Colonic mucosa (tissue), 4 donors: ENCODE measurements at regions of chr11 and their contacts with region 1.

Region 1: DNA sequence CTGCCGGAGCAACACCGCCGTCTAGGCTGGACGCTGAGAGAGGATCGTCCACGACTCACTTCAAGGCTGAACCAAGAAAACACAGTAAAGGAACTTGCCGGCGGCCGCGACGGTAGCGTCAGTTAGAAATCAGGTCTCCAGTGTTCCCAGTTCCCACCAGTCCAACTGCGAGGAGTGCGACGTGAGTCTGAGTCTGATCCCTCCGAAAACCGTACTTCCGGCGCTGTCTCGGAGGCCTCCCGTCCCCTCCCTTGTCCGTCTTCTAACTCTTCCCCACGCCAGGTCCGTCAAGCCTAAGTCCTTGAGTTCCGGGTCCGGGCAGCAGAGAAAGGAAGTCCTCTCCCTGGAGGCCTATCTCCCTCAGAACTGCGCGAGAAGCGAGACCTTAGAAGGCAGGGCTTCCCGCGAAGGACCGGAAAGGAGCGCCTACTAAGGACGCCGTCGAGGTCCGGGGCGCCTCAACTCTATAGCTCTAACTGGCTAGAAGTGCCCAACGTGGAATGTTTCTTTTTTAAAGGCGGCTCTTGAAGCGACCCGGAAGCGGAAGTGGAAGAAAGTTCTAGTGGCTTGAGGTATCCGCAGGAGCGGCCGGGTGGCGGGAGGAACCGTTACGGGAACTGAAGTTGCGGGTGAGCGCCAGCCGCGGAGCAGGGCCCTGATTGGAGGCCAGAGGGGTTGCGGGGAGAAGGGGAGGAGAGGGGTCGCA is at the starts of genes BANF1 and EIF1AD:
- DNase-seq: peak; percentile 95
- H3K4me3 ChIP-seq: peak within 1 kb of the TSS; percentile 71
- H3K27ac ChIP-seq: peak within 1 kb of the TSS; percentile 93
- H3K4me1 ChIP-seq: peaks cover 6% of the 10 kb centered on the region
- H3K27me3 ChIP-seq: no peaks in the 10 kb centered on the region
- CTCF ChIP-seq: no peak
- total RNA-seq, gene BANF1: 128 to 231 TPM
- total RNA-seq, gene EIF1AD: 27.8 to 32.8 TPM

Region 2: GRCh38 chr11:65720237-65720934 is 281.7 kb before region 1 on chr11 and contains the start of gene RNASEH2C:
- intact Hi-C with region 1: loop called (anchors 10 kb)
- DNase-seq: peak; percentile 87
- H3K4me3 ChIP-seq: peak within 1 kb of the TSS; percentile 48
- H3K27ac ChIP-seq: peak within 1 kb of the TSS; percentile 81
- H3K4me1 ChIP-seq: peaks cover 13% of the 10 kb centered on the region
- H3K27me3 ChIP-seq: no peaks in the 10 kb centered on the region
- CTCF ChIP-seq: no peak
- total RNA-seq, gene RNASEH2C: 26.1 to 58.1 TPM

Region 3: DNA sequence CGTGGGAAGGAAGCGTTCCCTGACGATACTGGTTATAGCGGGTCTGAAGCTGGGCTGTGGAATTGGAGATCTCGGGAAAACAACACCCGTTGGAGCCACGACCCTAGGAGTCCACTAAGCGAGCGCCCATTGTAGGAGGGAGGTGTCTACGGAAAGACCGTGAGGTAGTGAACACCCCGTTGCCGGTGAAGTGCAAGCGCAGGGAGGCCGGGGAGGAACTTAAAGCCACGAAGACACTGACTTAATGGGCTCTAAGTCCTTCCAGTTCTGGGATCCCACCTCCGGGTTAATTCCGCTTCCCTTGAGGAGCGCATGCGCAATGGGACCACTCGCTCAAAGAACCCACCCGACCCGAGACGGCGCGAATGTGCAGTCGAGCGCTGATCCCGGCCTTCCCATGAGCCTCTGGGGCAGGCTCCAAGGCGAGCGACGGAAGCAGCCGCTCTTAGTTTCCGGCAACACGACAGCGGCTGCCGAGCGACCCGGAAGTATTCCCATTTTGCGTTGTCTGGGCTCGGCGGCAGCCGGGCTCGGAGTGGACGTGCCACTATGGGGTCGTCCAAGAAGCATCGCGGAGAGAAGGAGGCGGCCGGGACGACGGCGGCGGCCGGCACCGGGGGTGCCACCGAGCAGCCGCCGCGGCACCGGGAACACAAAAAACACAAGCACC is 40.7 kb before region 1 on chr11 and contains the start of gene SART1:
- intact Hi-C with region 1: loop called (anchors 5 kb)
- DNase-seq: peak; percentile 97
- H3K4me3 ChIP-seq: peak within 1 kb of the TSS; percentile 94
- H3K27ac ChIP-seq: peak within 1 kb of the TSS; percentile 92
- H3K4me1 ChIP-seq: peaks cover 11% of the 10 kb centered on the region
- H3K27me3 ChIP-seq: no peaks in the 10 kb centered on the region
- CTCF ChIP-seq: no peak
- total RNA-seq, gene SART1: 40.0 to 50.9 TPM

Region 4: DNA sequence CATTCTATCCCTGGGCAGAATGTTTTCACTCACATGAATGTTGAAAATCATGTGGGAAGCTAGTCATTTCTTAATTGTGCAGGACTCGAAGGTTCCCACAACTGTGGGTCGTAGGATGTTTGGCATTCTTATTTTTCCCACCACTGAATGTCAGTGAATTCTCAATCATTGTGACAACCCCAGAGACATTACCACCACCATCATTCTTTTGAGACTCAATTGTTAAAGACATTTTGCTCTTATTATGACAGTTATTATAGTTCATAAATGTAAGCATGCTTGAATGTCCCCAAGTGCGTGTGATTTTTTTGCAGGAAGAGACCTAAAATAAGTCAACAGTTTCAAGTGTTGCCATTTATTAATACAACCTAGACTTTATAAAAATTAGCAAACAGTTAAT is 87.0 kb after region 1 on chr11:
- intact Hi-C with region 1: no loop called
- DNase-seq: no peak
- H3K4me3 ChIP-seq: no peak overlapping the region
- H3K27ac ChIP-seq: no peak overlapping the region
- H3K4me1 ChIP-seq: no peaks in the 10 kb centered on the region
- H3K27me3 ChIP-seq: no peaks in the 10 kb centered on the region
- CTCF ChIP-seq: no peak